ENCODE measurements at regions of chr11 and their contacts with region 1.

Region 1: GRCh38 chr11:14544611-14545010 is 24.4 kb upstream of the PSMA1 start:
- DNase-seq: no peak
- H3K4me3 Mint-ChIP-seq: no peak overlapping the region
- H3K27ac Mint-ChIP-seq: peak overlapping the region; percentile 80
- H3K4me1 Mint-ChIP-seq: peaks cover 42% of the 10 kb centered on the region
- H3K27me3 Mint-ChIP-seq: no peaks in the 10 kb centered on the region

Region 2: DNA sequence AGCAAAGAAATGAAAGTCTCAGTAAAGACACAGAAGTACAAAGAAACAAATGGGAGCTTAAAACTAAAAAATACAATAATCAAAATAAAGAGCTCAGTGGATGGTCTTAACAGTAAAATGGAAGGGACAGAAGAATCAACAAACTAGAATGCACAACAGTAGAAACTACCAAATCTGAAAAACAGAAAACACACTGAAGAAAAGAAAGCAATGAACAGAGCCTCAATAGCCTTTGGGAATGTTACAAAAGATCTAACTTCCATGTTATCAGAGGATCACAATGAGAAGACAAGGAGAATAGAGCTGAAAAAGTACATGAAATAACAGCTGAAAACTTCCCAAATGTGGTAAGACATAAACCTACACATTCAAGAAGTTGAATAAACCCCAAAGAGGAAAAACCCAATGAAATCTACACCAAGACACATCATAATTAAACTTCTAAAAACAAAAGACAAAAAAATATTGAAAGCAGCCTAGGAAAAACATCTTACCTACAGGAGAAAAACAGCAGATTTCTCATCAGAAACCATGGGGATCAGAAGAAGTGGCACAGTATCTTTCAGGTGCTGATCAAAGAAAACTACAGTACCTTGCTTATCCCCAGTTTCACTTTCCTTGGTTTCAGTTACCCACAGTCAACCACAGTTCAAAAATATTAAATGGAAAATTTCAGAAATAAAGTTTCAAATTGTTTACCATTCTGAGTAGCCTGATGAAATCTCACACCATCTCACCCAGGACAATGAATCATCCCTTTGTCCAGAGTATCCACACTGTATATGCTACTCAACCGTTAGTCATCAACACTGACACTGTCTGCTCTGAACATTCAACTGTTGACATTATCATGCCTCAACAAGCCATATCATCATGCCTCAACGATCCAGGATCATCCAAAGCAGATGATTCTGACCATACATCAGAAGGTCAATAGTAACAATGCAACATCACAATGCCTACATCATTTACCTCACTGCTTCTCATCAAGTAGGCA is 207.8 kb before region 1 on chr11:
- intact Hi-C with region 1: no loop called
- DNase-seq: no peak
- H3K4me3 Mint-ChIP-seq: no peak overlapping the region
- H3K27ac Mint-ChIP-seq: peak overlapping the region; percentile 80
- H3K4me1 Mint-ChIP-seq: peaks cover 47% of the 10 kb centered on the region
- H3K27me3 Mint-ChIP-seq: no peaks in the 10 kb centered on the region

Region 3: DNA sequence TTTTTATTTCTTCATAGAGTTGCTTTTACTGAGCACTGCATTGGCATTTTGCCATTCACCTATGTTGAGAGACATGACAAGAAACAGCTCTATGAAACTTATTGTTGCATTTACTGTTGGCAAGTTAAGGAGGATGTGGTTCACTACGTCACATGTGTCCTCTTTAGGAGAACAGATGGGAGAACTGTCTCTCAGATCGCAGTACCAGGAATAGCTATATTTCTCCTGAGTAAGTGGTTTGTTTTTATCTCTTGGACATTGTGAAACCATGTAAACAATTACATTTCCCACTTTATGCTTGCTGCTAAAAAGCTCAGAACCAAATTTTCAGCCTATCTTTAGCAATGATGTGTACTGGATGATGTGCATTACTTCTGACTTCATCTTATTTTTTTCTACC is 10.3 kb after region 1 on chr11:
- intact Hi-C with region 1: loop called (anchors 1 kb)
- DNase-seq: no peak
- H3K4me3 Mint-ChIP-seq: no peak overlapping the region
- H3K27ac Mint-ChIP-seq: peak overlapping the region; percentile 58
- H3K4me1 Mint-ChIP-seq: peaks cover 47% of the 10 kb centered on the region
- H3K27me3 Mint-ChIP-seq: no peaks in the 10 kb centered on the region

Region 4: GRCh38 chr11:14687943-14688627 is 143.5 kb after region 1 on chr11:
- intact Hi-C with region 1: no loop called
- DNase-seq: no peak
- H3K4me3 Mint-ChIP-seq: no peak overlapping the region
- H3K27ac Mint-ChIP-seq: peak overlapping the region; percentile 45
- H3K4me1 Mint-ChIP-seq: peaks cover 32% of the 10 kb centered on the region
- H3K27me3 Mint-ChIP-seq: no peaks in the 10 kb centered on the region

Region 5: DNA sequence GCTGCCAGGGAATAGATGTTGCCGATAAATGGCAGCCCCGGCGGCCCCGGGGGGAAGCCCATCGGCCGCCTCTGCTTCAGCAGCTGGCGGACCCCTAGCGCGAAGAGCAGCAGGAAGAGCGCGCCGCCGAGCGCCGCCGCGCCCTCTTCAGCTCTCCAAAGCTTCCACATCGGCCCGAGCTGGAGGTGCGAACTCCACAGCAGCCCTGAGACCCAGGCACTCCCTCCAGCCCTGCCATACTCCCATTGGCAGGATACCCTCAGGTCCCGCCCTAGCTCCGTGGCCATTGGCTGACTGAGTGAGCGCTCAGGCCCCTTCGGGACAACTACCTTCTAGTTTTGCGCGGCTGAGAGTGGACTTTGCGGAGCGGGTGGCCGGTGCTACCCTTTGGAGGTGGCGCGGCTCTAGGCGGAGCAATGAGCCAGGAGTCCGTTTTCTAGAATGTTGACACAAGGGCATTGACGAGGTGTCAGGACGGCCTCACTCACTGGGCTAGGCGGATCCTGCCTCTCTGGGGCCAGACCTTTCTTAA is 347.5 kb after region 1 on chr11 and contains the start of gene CYP2R1:
- intact Hi-C with region 1: loop called (anchors 2 kb)
- DNase-seq: peak; percentile 89
- H3K4me3 Mint-ChIP-seq: peak within 1 kb of the TSS; percentile 88
- H3K27ac Mint-ChIP-seq: peak within 1 kb of the TSS; percentile 98
- H3K4me1 Mint-ChIP-seq: peaks cover 53% of the 10 kb centered on the region
- H3K27me3 Mint-ChIP-seq: no peaks in the 10 kb centered on the region
- total RNA-seq, gene CYP2R1: 18.2 and 20.8 TPM in 2 replicates

Measured in activated T-helper 2 cell treated with anti-CD3 and anti-CD28 coated beads, Interferon-gamma antibody, Interleukin-2, Interleukin-4, amounts not matched to agents 10 μg/mL and 5 μg/mL and 100 μg/mL, durations not matched to agents 14 hours and 24 hours and 36 hours (primary cell).